ENCODE measurements at regions of chr1 and their contacts with region 1.

Region 1: DNA sequence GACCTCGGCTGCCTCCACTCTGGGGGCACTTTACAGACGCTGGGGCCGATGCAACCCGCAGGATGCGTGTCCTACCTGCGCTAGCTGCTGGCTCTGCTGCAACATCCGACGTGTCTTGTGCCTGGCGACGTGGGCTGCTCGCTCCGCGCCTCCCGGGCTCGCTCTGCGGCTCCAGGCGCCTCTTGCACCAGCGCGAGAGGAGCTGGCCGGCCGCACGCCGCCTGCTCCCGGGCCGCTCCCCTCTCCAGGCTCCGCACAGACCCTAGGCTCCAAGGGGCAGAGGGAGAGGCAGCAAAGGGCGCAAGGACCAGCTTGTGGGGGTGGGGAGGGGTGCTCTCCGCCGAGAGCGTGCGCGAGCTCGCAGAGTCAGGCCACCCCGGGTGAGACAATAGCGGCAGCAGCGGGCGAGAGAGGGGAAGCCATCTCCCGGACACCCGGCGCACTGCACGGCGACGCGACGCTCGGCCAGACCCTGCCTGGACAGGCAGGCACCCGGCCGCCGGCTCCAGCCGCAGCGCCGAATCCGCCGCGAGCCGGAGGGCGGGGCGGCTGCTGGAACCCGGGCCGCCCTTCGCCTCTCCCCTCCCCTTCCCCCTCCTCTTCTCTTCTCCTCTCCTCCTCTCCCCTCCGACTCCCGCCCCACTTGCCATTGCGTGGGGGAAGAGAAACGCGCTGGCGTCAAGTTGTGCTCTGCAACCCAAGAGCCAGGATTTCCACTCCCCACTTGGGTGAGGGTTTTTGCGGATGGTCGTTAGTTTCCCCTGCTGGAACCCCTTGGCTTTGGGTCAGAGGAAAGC is at the start of gene PIK3C2B:
- DNase-seq: peak; percentile 71
- ATAC-seq: peak; percentile 98
- H3K4me3 ChIP-seq: peak within 1 kb of the TSS; percentile 78 to 93 (median 90)
- H3K27ac ChIP-seq: peak within 1 kb of the TSS; percentile 89
- H3K4me1 ChIP-seq: peaks cover 31% of the 10 kb centered on the region
- H3K27me3 ChIP-seq: peaks cover 0 to 40% of the 10 kb centered on the region in 2 experiments; a peak in 4 of 5 replicates
- CTCF ChIP-seq: peak; percentile 67
- EP300 ChIP-seq: no peak
- POLR2A ChIP-seq: peak; percentile 60 to 68; a peak in 3 of 4 replicates
- RAD21 ChIP-seq: peak; percentile 87
- total RNA-seq, gene PIK3C2B: 2.7 and 3.4 TPM in 2 replicates

Region 2: GRCh38 chr1:204446370-204447111 is 47.9 kb before region 1 on chr1:
- CTCF ChIA-PET with region 1: interaction called, 78 read pairs
- POLR2A ChIA-PET with region 1: interaction called, 7 read pairs
- in situ Hi-C with region 1: no loop called
- intact Hi-C with region 1: loop called (anchors 2 kb)
- DNase-seq: peak; percentile 55
- ATAC-seq: peak; percentile 94
- H3K4me3 ChIP-seq: no peak overlapping the region
- H3K27ac ChIP-seq: no peak overlapping the region
- H3K4me1 ChIP-seq: peaks cover 12% of the 10 kb centered on the region
- H3K27me3 ChIP-seq: no peaks in the 10 kb centered on the region
- CTCF ChIP-seq: peak; percentile 82
- EP300 ChIP-seq: no peak
- POLR2A ChIP-seq: no peak
- RAD21 ChIP-seq: peak; percentile 82

Region 3: GRCh38 chr1:204516180-204516879 is 21.9 kb after region 1 on chr1 and contains the start of gene MDM4:
- CTCF ChIA-PET with region 1: no interaction called
- POLR2A ChIA-PET with region 1: interaction called, 21 read pairs
- in situ Hi-C with region 1: no loop called
- intact Hi-C with region 1: no loop called
- DNase-seq: peak; percentile 96
- ATAC-seq: peak; percentile 100
- H3K4me3 ChIP-seq: peak within 1 kb of the TSS; percentile 81 to 88 (median 86)
- H3K27ac ChIP-seq: peak within 1 kb of the TSS; percentile 95
- H3K4me1 ChIP-seq: peaks cover 31% of the 10 kb centered on the region
- H3K27me3 ChIP-seq: no peaks in the 10 kb centered on the region; a peak in 1 of 5 replicates
- CTCF ChIP-seq: peak; percentile 13; the same call in 1 of the 2 replicates
- EP300 ChIP-seq: 0 out of 4 replicates have a peak, but pooled peaks of 1 of the 2 experiments have one; percentile 26
- POLR2A ChIP-seq: peak; percentile 56 to 86
- RAD21 ChIP-seq: peak; percentile 42
- total RNA-seq, gene MDM4: 13.8 and 19.0 TPM in 2 replicates